HEK293T (cell line): ENCODE measurements at regions of chr17 and their contacts with region 1.

Region 1: GRCh38 chr17:43940630-43941029 is 1.6 kb downstream of the PPY start:
- DNase-seq: peak; percentile 61

Region 2: DNA sequence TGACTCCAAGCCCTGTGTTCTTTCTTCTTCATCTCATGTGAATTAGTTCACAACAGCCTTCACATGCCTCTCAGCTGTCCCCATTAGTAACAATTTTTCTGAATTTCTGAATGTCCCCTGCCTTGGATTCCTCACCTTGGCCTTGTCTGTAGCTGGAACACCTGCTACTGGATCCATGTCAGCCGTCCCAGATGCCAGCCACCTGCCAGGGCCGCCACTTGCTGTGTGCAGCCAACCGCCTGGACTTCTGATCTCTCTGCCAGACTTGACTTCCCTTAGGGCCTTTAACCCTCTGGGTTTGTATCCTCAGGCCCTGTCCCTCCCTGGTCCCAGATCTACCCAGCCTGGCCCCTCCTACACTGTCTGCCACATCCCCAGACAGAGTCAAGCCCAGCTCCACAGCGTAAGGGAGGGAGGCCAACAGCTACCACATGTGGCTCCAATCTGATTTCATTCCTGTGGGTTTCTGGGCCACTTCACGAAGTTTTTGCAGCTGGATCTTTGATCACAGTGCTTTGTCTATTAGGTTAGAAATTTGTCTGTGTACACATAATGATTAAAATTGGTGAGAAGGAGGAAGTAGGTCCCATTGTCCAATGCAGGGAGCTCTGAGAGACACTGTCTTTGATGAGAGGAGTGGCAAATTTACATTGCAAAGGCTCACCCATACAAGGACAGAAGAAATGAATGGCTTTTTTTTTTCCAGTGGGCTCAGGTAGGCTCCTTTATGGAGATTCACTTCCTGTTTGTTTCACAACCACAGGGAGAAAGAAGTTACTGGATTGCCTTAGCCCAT is 48.6 kb before region 1 on chr17:
- CTCF ChIA-PET with region 1: no interaction called
- POLR2A ChIA-PET with region 1: no interaction called
- DNase-seq: no peak

Region 3: DNA sequence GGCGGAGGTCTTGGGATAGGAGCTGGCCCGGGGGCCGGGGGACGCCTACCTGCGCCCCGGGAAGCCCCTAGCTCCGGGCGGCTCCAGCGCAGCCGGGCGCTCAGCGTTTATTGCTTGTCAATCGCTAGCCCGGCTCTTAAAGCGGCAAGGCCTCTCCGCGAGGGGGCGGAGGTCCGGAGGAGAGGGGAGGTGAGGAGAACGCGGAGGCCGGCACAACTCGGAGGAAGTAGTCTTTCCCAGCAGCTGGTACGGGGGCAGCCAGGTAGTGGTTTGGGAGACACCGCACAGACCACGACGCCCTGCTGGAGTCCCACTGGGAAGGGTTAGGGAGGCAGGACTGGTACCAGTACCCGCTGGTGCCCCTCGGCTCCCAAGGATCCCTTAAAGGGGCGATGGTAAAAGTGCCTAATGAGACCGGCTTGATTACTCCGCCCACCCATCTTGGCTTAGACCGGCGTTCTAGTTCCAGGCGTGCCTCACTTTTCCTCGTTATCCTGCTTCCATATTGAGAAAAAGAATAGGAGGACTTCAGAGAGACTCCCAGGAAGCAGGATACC is 33.1 kb before region 1 on chr17 and contains the start of gene MPP2:
- CTCF ChIA-PET with region 1: interaction called, 13 read pairs
- POLR2A ChIA-PET with region 1: interaction called, 8 read pairs
- DNase-seq: peak; percentile 83

Region 4: DNA sequence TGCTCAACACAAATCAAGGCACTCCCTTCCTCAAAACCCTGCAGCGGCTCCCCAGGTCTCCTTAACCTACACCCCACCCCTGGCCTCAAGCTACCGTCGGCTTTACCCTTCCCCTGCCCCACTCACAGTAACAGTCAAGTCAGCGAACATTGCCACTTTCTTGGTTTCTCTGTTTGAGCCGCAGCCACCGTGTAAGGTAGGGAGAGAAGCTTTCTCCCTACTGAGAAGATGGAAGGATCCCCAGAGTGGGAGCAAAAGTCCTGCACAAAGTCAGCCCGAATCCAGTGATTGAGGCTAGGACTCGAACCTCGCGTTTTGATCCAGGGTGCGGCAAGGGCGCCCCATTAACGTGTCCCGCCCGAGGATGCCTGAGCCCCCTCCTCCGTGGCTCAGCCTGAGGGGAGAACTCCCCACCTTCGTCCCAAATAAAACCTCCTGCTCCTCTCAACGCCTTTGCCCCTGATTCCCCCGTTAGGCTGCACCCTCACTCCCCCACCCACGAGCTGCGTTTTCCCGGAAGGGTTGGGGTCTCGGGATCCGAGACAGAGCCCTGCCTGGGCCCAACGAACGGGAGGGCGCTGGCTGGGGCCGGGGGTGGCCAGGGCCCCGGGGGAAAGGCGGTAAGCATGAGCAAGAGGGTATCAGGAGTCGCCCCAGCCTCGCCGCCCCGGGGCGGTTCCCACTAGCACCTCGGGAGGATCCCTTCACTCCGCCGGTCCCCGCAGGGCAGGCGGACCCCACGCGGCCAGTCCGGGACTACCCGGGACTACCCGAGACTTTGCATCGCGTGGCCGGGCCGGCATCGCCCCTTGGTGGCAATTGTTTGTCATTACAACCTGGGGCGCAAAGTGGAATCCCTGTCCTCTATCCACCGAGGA is 53.9 kb after region 1 on chr17:
- CTCF ChIA-PET with region 1: interaction called, 58 read pairs
- POLR2A ChIA-PET with region 1: interaction called, 5 read pairs
- DNase-seq: peak; percentile 88